PC-3 (cell line): ENCODE measurements at regions of chr14 and their contacts with region 1.

Region 1: DNA sequence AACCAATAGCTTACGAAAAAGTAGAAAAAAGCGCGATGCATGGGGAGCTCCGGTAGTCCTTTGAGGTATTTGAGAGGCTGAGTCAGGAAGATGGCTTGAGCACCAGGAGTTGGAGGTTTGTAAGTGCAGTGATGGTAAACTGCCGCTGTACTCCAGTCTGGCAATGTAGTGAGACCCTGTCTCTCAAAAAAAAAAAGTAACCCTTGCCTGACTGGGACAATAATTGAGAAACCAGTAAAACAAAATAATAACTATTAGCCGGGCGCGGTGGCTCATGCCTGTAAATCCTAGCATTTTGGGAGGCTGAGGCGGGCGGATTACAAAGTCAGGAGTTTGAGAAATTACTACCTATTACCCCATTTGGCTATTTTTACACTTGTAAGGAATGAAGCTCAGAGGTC is 632 bp upstream of the ACOT2 start:
- DNase-seq: peak; percentile 62
- ATAC-seq: peak; percentile 12; the same call in 1 of the 2 replicates
- H3K4me3 ChIP-seq: peak overlapping the region; percentile 67
- H3K27ac ChIP-seq: no peak overlapping the region
- H3K4me1 ChIP-seq: peaks cover 31% of the 10 kb centered on the region
- H3K27me3 ChIP-seq: no peaks in the 10 kb centered on the region
- CTCF ChIP-seq: no peak

Region 2: GRCh38 chr14:72617391-72618031 is 950.9 kb before region 1 on chr14:
- CTCF ChIA-PET with region 1: no interaction called
- POLR2A ChIA-PET with region 1: no interaction called
- intact Hi-C with region 1: no loop called
- DNase-seq: no peak
- ATAC-seq: no peak
- H3K4me3 ChIP-seq: no peak overlapping the region
- H3K27ac ChIP-seq: no peak overlapping the region
- H3K4me1 ChIP-seq: peaks cover 29% of the 10 kb centered on the region
- H3K27me3 ChIP-seq: no peaks in the 10 kb centered on the region
- CTCF ChIP-seq: no peak

Region 3: DNA sequence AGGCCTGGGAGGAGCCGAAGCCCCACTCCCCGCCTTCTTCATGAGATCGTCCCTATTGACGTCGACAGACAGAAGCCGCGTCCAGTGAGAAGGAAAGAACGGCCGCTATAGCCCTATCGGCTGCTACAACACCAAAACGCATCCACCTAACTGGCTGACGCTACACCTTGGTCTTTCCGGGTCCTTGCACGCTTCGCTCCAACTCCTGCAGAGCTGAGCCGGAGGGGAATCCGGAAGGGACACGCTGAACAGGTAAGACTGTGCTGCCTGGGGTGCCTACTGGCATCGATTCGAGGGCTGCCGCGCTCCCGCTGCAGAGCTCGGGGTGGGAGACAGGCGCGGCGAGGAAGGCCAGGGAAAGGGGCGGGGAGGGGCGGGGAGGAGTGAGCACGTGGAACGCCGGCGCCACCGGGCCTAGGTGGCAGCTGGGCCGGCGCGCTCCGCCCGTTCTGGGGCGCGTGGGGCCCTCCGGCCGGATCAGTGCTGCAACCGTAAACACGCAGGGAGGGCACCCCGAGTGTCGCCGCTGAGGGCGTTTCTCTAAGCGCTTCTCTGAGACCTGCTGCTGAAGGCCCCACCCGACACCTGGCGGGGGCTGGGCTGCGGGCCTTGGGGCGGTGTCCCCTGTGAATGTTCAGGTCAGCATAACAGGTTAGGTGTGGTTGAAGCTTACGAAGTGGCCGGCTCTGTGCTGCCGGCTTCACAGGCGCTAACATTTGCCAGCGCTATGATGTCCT is 641.9 kb before region 1 on chr14 and contains the start of gene DCAF4:
- CTCF ChIA-PET with region 1: no interaction called
- POLR2A ChIA-PET with region 1: no interaction called
- intact Hi-C with region 1: loop called (anchors 5 kb)
- DNase-seq: peak; percentile 99
- ATAC-seq: peak; percentile 96
- H3K4me3 ChIP-seq: peak within 1 kb of the TSS; percentile 77
- H3K27ac ChIP-seq: peak within 1 kb of the TSS; percentile 63
- H3K4me1 ChIP-seq: peaks cover 12% of the 10 kb centered on the region
- H3K27me3 ChIP-seq: no peaks in the 10 kb centered on the region
- CTCF ChIP-seq: no peak
- total RNA-seq, gene DCAF4: 55.8 and 56.8 TPM in 2 replicates

Region 4: DNA sequence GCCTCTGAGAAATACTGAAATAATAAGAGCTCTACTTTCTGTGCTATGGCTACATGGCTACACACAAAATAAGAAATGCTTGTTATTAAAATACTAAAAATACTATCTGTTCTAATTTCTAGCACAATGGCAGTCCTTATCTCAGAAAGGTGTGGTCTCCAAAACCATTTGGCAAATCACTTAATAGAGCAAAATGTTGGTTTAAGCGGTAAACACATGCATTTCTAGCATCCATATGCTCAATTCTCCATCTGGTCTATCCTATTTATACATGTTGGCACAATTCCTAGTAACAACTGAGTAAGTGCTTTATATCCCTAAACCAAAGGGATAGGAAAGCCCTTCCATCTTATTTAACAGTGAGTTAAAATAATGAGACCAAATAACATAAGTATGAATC is 224.1 kb before region 1 on chr14:
- CTCF ChIA-PET with region 1: no interaction called
- POLR2A ChIA-PET with region 1: no interaction called
- intact Hi-C with region 1: no loop called
- DNase-seq: no peak
- ATAC-seq: no peak
- H3K4me3 ChIP-seq: no peak overlapping the region
- H3K27ac ChIP-seq: no peak overlapping the region
- H3K4me1 ChIP-seq: no peaks in the 10 kb centered on the region
- H3K27me3 ChIP-seq: no peaks in the 10 kb centered on the region
- CTCF ChIP-seq: no peak

Region 5: DNA sequence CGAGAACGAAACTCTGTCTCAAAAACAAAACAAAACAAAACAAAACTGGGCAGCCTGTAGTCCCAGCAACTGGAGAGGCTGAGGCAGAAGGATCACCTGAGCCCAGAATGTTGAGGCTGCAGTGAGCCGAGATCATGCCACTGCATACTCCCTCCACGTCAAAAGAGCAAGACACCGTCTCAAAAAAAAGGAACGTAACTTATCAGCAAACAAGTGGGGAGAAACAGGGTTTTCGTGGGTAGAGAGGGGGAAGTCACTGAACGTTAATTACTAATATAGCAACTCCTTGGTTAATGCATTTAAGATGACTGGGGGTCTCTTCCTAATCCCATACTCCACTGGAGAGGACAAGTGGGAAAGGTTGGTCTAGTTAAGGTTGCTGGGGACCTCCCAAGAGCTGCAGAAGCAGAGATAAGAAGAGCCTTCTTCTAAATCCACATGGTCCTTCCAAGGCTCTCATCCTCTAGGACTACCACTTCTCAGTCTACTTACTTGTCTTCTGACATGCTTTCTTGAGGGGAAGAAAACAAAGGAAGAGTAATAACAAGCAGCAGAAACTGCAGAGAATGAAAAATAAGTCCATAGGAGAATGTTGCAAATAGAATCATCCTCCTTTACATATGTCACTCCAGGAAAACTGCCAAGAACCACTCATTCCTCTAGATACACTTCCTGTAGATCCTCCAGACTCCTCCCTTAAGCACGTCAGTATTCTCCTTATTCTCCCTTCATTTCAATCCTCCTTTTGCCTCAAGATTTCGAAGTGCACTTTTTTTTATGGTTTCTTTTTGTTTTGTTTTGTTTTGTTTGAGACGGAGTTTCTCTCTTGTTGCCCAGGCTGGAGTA is 115.8 kb before region 1 on chr14:
- CTCF ChIA-PET with region 1: no interaction called
- POLR2A ChIA-PET with region 1: interaction called, 16 read pairs
- intact Hi-C with region 1: no loop called
- DNase-seq: peak; percentile 95
- ATAC-seq: peak; percentile 80
- H3K4me3 ChIP-seq: no peak overlapping the region; the same call in 1 of the 2 replicates
- H3K27ac ChIP-seq: no peak overlapping the region
- H3K4me1 ChIP-seq: peaks cover 29% of the 10 kb centered on the region
- H3K27me3 ChIP-seq: no peaks in the 10 kb centered on the region
- CTCF ChIP-seq: no peak

Region 6: DNA sequence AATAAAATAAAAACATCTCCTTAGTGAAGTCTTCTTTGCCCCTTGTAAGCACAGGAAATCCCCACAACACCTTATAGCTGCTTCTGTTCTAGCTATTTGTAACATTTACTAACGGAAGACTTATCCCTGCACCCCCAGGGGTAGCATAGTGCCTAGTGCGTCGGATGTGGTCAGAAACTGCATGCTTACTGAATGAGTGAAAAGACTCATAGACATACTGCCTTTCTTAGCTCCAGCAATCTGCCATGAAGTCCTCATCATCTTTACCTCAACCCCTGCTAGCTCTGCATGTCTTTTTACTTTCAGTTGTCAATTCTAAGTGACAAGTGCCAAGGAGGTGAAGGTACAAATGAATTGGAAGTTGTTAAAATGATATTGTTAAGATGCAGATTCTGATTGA is 64.7 kb before region 1 on chr14:
- CTCF ChIA-PET with region 1: interaction called, 10 read pairs
- POLR2A ChIA-PET with region 1: interaction called, 6 read pairs
- intact Hi-C with region 1: loop called (anchors 2 kb)
- DNase-seq: no peak
- ATAC-seq: no peak
- H3K4me3 ChIP-seq: no peak overlapping the region
- H3K27ac ChIP-seq: no peak overlapping the region
- H3K4me1 ChIP-seq: no peaks in the 10 kb centered on the region
- H3K27me3 ChIP-seq: no peaks in the 10 kb centered on the region
- CTCF ChIP-seq: no peak

Region 7: GRCh38 chr14:73633116-73634010 is 65.0 kb after region 1 on chr14:
- CTCF ChIA-PET with region 1: no interaction called
- POLR2A ChIA-PET with region 1: no interaction called
- intact Hi-C with region 1: loop called (anchors 2 kb)
- DNase-seq: peak; percentile 81
- ATAC-seq: peak; percentile 80
- H3K4me3 ChIP-seq: peak overlapping the region; percentile 64
- H3K27ac ChIP-seq: no peak overlapping the region
- H3K4me1 ChIP-seq: peaks cover 8% of the 10 kb centered on the region; the same call in 1 of the 2 replicates
- H3K27me3 ChIP-seq: no peaks in the 10 kb centered on the region
- CTCF ChIP-seq: peak; percentile 94